Dendritic cell treated with granulocyte-macrophage colony-stimulating factor and Interleukin-4, amounts not matched to agents 40 ng/mL and 50 ng/mL, for 4 days (primary cell): ENCODE measurements at regions of chr4 and their contacts with region 1.

Region 1: DNA sequence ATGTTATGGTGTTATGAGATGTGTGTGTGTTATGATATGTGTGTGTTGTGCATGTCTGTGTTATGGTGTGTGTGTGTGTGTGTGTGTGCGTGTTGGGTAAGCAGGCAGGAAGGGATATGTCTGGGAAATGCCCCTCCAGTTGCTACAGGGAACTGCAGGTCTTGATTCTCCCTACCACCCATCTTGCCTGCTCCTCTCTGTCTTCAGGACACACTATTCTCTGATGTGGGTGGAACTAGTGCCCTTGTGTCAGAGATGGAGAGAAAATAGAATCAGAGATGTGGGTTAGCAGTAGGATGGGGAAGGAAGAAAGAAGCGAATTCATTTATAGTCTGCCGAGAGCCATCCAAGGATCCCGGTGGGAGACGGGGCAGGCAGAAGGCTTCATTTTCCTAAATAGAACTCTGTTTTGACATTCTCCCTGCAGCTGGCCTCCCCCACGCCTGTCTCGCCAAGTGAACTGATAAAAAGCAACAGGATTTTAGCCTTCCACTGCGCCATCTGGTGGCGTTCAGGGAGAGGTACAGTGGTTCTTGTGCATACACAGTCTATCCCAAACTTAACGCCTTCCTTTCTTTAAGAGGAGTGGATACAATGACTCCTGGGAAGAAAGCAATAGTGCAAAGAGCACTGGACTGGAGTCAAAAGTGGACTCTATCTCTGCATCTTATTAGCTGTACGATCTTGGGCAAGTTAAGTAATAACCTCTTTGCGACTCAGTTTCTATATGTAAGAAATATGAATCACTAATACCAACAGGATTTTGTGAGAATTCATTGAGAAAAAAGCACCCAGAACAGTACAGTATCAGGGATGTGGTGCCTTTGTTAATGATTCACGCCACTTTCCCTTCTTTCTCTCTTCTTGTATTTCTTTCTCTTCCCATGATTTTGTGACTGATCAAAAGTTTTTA is 14.1 kb upstream of the MGST2 start:
- H3K4me3 Mint-ChIP-seq: no peak overlapping the region
- H3K27ac Mint-ChIP-seq: no peak overlapping the region
- H3K4me1 Mint-ChIP-seq: peaks cover 17% of the 10 kb centered on the region
- H3K27me3 Mint-ChIP-seq: peaks cover 3% of the 10 kb centered on the region

Region 2: DNA sequence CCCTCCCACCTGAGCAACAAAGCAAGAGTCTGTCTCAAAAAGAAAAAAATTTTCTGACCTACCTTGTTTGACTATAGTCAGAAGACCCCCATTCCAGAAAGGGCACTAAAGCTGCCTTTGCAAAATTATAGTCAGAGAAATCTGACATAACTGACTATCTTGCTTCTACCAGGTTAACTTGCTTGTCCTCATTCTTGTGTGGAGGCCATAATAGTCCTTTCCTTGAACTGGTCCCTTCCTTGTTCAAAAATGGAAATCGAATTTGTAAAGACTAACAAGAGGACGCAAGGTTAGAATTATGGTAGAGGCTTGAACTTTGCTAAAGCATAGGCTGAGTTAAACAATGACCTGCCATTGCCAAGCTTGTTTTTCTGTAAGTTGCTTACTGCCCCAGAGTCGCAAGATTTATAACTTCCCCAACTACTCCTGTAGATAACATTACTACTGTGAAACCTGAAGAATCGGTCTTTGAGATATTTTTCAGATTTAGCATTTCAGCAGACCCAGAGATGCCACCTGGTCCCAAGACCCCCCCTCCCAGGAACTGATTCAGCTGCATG is 152.4 kb before region 1 on chr4:
- intact Hi-C with region 1: loop called (anchors 5 kb)
- H3K4me3 Mint-ChIP-seq: no peak overlapping the region
- H3K27ac Mint-ChIP-seq: no peak overlapping the region
- H3K4me1 Mint-ChIP-seq: peaks cover 19% of the 10 kb centered on the region
- H3K27me3 Mint-ChIP-seq: no peaks in the 10 kb centered on the region

Region 3: DNA sequence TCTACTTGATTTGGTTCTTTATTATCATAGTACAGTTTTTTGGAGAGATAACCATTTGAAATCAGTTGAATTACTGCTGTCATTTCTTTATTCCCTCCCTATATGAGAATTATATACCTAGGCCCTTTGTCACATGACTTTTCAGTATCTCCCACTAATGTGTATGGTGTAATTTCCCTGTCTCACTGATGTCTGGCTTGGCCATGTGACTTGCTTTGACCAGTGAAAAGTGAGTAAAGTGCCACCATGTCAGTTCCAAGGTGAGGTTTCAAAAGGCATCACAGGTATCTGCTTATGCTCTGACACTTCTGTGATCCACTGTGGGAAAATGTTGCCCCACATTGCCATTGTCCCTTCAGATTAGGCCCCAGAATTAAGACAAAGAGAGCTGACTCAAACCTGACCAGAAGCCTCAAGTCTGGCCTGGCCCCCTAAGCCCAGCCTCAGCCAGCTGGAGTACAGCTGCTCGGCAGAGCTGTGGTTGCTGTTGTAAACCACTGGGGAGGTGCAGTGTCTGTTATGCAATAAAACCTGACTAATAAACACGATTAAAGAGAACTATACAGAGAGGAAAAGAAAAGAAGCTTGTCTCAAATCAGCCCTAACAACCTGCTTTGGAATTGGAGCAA is 123.0 kb before region 1 on chr4:
- intact Hi-C with region 1: no loop called
- H3K4me3 Mint-ChIP-seq: no peak overlapping the region
- H3K27ac Mint-ChIP-seq: no peak overlapping the region
- H3K4me1 Mint-ChIP-seq: peaks cover 46% of the 10 kb centered on the region
- H3K27me3 Mint-ChIP-seq: no peaks in the 10 kb centered on the region

Region 4: GRCh38 chr4:139603576-139604387 is 47.8 kb before region 1 on chr4:
- intact Hi-C with region 1: loop called (anchors 1 kb)
- H3K4me3 Mint-ChIP-seq: no peak overlapping the region
- H3K27ac Mint-ChIP-seq: no peak overlapping the region
- H3K4me1 Mint-ChIP-seq: peaks cover 13% of the 10 kb centered on the region
- H3K27me3 Mint-ChIP-seq: peaks cover 4% of the 10 kb centered on the region

Region 5: GRCh38 chr4:139711461-139711860 is 59.9 kb after region 1 on chr4:
- intact Hi-C with region 1: no loop called
- H3K4me3 Mint-ChIP-seq: no peak overlapping the region
- H3K27ac Mint-ChIP-seq: no peak overlapping the region
- H3K4me1 Mint-ChIP-seq: no peaks in the 10 kb centered on the region
- H3K27me3 Mint-ChIP-seq: no peaks in the 10 kb centered on the region

Region 6: GRCh38 chr4:140176735-140177134 is 525.2 kb after region 1 on chr4:
- intact Hi-C with region 1: no loop called
- H3K4me3 Mint-ChIP-seq: no peak overlapping the region
- H3K27ac Mint-ChIP-seq: no peak overlapping the region
- H3K4me1 Mint-ChIP-seq: peaks cover 13% of the 10 kb centered on the region
- H3K27me3 Mint-ChIP-seq: no peaks in the 10 kb centered on the region